GM12878 (cell line): ENCODE measurements at regions of chr11 and their contacts with region 1.

Region 1: DNA sequence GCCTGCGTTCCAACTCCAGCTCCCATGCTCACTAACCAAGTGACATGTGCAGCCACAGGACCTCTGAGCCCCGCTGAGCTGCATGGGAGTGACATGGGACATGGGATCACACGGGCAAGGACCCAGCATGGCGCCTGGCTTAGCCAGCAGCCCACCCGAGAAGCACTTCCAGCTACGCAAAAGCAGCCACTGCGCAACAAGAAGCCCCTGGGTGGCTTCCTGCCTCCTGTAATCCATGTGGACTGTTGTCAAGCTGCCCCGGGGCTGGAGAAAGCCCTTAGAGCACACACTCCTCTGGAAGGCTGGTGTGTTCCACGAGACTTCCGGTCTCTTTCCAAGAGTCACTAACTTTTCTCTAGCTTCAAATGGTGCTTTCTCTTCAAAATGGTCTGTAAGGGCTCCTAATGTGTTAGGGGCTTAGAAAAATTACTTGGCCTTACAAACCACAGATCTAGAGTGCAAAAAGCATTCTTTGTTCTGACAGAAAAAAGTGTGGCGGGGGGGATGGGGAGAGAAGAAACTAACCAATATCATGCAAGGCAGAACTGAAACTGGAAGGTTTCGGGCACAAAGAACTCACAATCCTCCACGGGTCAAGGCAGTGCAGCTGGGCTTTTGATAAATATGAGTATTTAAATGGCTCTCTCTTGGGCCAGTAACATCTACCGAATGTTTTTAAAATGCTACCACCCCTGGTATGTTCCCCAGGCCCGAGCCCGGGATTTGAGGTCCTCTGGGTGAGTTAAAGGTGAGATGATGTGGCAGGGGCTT is 5.5 kb downstream of the C11orf24 start:
- DNase-seq: peak; percentile 81
- ATAC-seq: peak; percentile 86
- H3K4me3 ChIP-seq: peak overlapping the region; percentile 60
- H3K27ac ChIP-seq: peak overlapping the region; percentile 93
- H3K4me1 ChIP-seq: peaks cover 39% of the 10 kb centered on the region
- H3K27me3 ChIP-seq: no peaks in the 10 kb centered on the region
- CTCF ChIP-seq: no peak
- EP300 ChIP-seq: peak; percentile 71 to 81; a peak in 3 of 4 replicates
- POLR2A ChIP-seq: no peak
- RAD21 ChIP-seq: 0 out of 2 replicates have a peak, but pooled peaks have one; percentile 31

Region 2: DNA sequence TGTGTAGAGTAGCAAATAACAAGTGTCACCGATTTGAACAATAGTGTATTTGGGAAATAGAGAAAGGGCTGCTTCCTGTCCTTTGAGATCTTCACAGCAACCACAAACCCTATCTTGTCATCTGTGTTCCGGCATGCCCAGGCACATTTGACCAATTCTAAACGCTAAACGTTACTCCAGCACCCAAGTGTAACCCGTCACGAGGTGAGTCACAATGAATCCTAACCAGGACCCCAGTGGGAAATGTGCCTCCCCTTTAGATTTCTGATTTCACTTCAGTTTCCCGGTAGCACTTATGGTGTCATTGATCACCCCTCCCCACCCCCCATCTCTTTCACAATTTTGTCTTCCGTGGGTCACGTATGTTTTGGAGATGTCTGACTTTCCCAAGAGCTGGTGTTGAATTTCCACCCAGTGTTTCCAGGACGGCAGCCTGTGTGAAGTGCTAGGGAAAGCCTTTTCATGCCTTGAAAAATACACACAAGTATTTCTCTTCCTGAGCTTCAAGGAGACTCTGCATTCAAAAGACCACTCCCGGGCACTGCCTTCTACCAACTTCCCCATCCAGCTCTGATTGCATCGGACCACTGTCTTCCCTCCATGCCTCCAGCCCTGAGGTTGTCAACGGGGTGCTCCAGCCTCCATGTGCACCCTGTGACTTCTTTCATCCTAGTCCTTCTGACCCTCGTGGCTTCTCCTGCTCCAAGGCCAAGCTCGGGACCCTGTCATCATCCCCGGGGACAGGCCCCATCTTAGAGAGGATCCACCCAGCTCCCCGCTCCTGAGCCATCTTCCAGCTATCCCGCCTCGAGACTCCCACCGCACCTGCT is 16.1 kb after region 1 on chr11:
- CTCF ChIA-PET with region 1: interaction called, 10 read pairs
- POLR2A ChIA-PET with region 1: interaction called, 13 read pairs
- RAD21 ChIA-PET with region 1: interaction called, 3 read pairs
- SMC1A ChIA-PET with region 1: interaction called, 14 read pairs
- in situ Hi-C with region 1: no loop called
- intact Hi-C with region 1: no loop called
- DNase-seq: peak; percentile 92
- ATAC-seq: peak; percentile 99
- H3K4me3 ChIP-seq: peak overlapping the region; percentile 48; the same call in 1 of the 2 replicates
- H3K27ac ChIP-seq: peak overlapping the region; percentile 61
- H3K4me1 ChIP-seq: peaks cover 16% of the 10 kb centered on the region
- H3K27me3 ChIP-seq: no peaks in the 10 kb centered on the region
- CTCF ChIP-seq: no peak
- EP300 ChIP-seq: peak; percentile 57 to 60; a peak in 2 of 4 replicates
- POLR2A ChIP-seq: no peak
- RAD21 ChIP-seq: no peak

Region 3: DNA sequence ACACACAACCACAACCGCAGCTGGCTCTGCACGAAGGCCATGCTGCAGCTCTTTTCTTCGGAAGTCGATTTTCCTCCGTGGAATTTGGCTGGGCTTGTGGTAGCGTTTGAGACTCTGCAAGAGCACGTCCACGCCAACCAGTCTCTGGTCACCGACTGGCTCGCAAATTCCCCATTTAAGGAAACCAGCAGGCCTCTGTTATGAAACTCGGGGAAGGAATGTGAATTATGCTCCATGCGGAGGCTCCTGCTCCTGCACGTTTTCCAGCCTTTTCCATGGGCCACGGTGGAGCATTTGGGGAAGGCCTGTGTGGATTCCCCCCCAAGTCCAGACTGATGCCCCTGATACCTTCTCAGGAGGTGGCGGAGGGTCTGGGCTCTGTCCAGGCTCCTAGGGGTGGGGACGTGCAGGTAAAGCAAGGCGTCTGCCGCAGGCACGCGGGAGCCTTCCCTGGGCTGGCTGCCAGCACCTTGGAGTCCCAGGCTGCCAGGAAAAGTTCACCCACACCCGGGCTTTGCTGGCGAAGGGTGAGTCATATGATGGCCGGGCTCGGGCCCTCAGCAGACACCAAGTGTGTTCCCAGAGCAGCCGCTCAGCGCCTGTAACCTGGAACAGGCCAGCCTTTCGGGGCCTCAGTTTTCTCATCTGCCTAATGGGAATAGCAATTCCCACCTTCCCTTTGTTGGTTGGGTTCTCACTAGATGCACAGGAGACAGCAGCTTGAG is 88.0 kb after region 1 on chr11:
- CTCF ChIA-PET with region 1: no interaction called
- POLR2A ChIA-PET with region 1: no interaction called
- RAD21 ChIA-PET with region 1: no interaction called
- SMC1A ChIA-PET with region 1: no interaction called
- in situ Hi-C with region 1: no loop called
- intact Hi-C with region 1: no loop called
- DNase-seq: no peak
- ATAC-seq: no peak
- H3K4me3 ChIP-seq: no peak overlapping the region
- H3K27ac ChIP-seq: no peak overlapping the region
- H3K4me1 ChIP-seq: no peaks in the 10 kb centered on the region
- H3K27me3 ChIP-seq: no peaks in the 10 kb centered on the region
- CTCF ChIP-seq: no peak
- EP300 ChIP-seq: no peak
- POLR2A ChIP-seq: no peak
- RAD21 ChIP-seq: no peak

Region 4: GRCh38 chr11:68459886-68460740 is 193.8 kb after region 1 on chr11:
- CTCF ChIA-PET with region 1: no interaction called
- POLR2A ChIA-PET with region 1: interaction called, 5 read pairs
- RAD21 ChIA-PET with region 1: no interaction called
- SMC1A ChIA-PET with region 1: no interaction called
- in situ Hi-C with region 1: no loop called
- intact Hi-C with region 1: loop called (anchors 5 kb)
- DNase-seq: peak; percentile 90
- ATAC-seq: peak; percentile 93
- H3K4me3 ChIP-seq: peak overlapping the region; percentile 91
- H3K27ac ChIP-seq: peak overlapping the region; percentile 97
- H3K4me1 ChIP-seq: peaks cover 2% of the 10 kb centered on the region; the same call in 1 of the 2 replicates
- H3K27me3 ChIP-seq: no peaks in the 10 kb centered on the region
- CTCF ChIP-seq: no peak
- EP300 ChIP-seq: peak in 1 of 2 experiments; percentile 70; a peak in 2 of 4 replicates
- POLR2A ChIP-seq: no peak
- RAD21 ChIP-seq: no peak